Activated CD8-positive, alpha-beta T cell treated with anti-CD3 and anti-CD28 coated beads, Interleukin-2, amount 10 ng/mL, durations not matched to agents 7 days and 5 days (primary cell): ENCODE measurements at regions of chr9 and their contacts with region 1.

Region 1: GRCh38 chr9:22307013-22307711 is 139.5 kb upstream of the DMRTA1 start:
- DNase-seq: peak; percentile 25
- ATAC-seq: no peak
- H3K4me3 Mint-ChIP-seq: no peak overlapping the region
- H3K27ac Mint-ChIP-seq: no peak overlapping the region
- H3K4me1 Mint-ChIP-seq: no peaks in the 10 kb centered on the region
- H3K27me3 Mint-ChIP-seq: no peaks in the 10 kb centered on the region

Region 2: GRCh38 chr9:22257026-22257425 is 50.1 kb before region 1 on chr9:
- CTCF ChIA-PET with region 1: no interaction called
- POLR2A ChIA-PET with region 1: no interaction called
- DNase-seq: no peak
- ATAC-seq: no peak
- H3K4me3 Mint-ChIP-seq: no peak overlapping the region
- H3K27ac Mint-ChIP-seq: no peak overlapping the region
- H3K4me1 Mint-ChIP-seq: no peaks in the 10 kb centered on the region
- H3K27me3 Mint-ChIP-seq: peaks cover 8% of the 10 kb centered on the region

Region 3: DNA sequence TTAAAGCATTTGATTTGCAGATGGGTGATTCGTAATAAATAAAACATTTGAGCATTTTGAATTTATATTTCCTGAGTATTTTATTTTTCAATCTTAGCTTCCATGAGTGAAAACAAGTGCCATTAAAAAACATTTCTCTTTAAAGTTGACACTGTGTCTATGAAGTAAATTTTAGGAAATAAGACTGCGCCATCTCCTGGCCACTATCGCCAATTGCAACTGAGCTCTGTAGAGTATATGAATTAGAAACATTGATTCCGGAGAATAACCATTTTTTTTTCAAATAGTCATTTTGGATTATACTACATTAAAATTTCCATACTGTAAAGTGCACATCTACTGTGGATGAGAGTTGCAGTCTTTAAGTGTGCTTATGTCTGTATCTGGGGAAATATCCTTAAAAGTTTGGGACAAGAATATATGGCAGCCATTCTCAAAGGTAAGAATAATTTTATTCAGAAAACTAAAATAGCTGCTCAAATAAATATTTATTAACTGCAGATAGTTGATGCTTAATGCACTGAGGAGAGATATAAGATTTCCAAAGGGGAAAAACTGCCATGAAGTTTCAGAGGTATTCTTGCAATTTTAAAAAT is 145.4 kb after region 1 on chr9:
- CTCF ChIA-PET with region 1: interaction called, 14 read pairs
- POLR2A ChIA-PET with region 1: no interaction called
- DNase-seq: peak; percentile 61
- ATAC-seq: no peak
- H3K4me3 Mint-ChIP-seq: no peak overlapping the region
- H3K27ac Mint-ChIP-seq: no peak overlapping the region
- H3K4me1 Mint-ChIP-seq: peaks cover 2% of the 10 kb centered on the region
- H3K27me3 Mint-ChIP-seq: peaks cover 27% of the 10 kb centered on the region